IMR-90 (cell line): ENCODE measurements at regions of chr10 and their contacts with region 1.

Region 1: DNA sequence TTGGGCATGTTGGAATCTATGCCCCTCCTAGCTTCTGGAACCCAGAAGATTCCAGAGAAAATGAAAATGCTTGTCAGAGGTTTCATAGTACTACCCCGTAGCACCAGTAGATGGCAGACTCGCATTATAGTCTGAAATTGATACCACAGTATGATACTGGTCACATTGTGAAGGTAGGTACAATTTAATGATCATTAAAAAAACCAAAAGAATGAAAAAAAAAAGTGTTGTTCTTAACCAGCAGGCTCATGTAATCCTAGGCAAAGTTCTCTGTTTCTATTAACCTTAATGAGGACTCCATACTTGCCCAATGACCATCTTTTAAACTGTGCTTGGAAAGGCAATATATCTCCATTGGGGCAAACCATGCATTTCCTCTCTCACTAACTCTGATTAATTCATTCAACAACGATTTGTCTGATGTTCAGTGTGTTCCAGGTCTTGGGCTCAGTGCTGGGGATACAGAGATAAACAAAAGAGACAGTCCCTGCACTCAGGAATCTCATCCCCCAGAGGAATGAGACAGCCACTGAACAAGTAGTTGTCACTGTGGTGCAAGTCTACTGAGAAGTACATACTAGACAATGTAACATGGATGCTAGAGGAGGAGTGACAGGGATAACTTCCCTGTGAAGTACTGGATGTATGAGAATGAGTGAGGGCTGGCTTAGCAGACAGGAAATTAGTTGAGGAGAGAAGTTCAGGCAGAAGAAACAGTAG is 223.5 kb upstream of the PHYHIPL start:
- DNase-seq: peak; percentile 42
- ATAC-seq: peak; percentile 84
- H3K4me3 ChIP-seq: no peak overlapping the region
- H3K27ac ChIP-seq: no peak overlapping the region
- H3K4me1 ChIP-seq: no peaks in the 10 kb centered on the region
- H3K27me3 ChIP-seq: peaks cover 12% of the 10 kb centered on the region
- CTCF ChIP-seq: peak; percentile 77
- POLR2A ChIP-seq: no peak
- RAD21 ChIP-seq: peak; percentile 72

Region 2: DNA sequence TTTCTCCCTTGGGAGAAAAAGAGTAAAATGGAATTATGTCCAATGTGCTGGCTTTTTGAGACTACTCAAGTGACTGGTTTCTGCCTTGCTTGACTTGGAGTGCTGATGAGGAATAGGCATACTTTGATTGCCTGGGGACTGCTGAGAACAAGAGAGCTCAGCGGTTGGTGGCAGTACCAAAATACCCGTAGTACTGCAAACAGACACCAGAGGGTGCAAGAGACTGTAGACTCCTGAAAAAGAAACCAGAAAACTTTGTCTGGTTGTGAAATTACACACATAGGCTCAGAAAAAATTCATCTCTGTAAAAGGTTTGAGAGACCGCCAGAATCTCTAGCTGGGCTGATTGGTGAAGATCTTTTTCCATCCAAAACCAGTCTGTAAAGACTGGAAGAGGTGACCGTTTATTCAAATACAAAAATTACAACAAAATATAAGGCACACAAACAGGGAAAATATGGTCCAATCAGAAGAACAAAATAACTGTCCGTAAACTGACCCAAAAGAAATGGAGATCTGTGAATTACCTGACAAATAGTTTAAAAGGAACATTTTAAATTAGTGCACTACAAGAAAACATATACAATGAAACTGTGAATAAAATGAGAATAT is 421.7 kb before region 1 on chr10:
- CTCF ChIA-PET with region 1: interaction called, 4 read pairs
- POLR2A ChIA-PET with region 1: no interaction called
- dilution Hi-C with region 1: no loop called
- in situ Hi-C with region 1: no loop called
- intact Hi-C with region 1: loop called (anchors 1 kb)
- DNase-seq: peak; percentile 76
- ATAC-seq: peak; percentile 87
- H3K4me3 ChIP-seq: no peak overlapping the region
- H3K27ac ChIP-seq: no peak overlapping the region
- H3K4me1 ChIP-seq: 0 out of 2 replicates have a peak, but pooled peaks cover 2% of the 10 kb centered on the region
- H3K27me3 ChIP-seq: no peaks in the 10 kb centered on the region
- CTCF ChIP-seq: peak; percentile 82
- POLR2A ChIP-seq: no peak
- RAD21 ChIP-seq: peak; percentile 91

Region 3: GRCh38 chr10:59098387-59098786 is 145.5 kb after region 1 on chr10:
- CTCF ChIA-PET with region 1: no interaction called
- POLR2A ChIA-PET with region 1: no interaction called
- dilution Hi-C with region 1: no loop called
- in situ Hi-C with region 1: no loop called
- intact Hi-C with region 1: loop called (anchors 1 kb)
- DNase-seq: peak; percentile 65
- ATAC-seq: peak; percentile 83
- H3K4me3 ChIP-seq: no peak overlapping the region
- H3K27ac ChIP-seq: no peak overlapping the region
- H3K4me1 ChIP-seq: no peaks in the 10 kb centered on the region; the same call in 1 of the 2 replicates
- H3K27me3 ChIP-seq: no peaks in the 10 kb centered on the region
- CTCF ChIP-seq: no peak
- POLR2A ChIP-seq: no peak
- RAD21 ChIP-seq: no peak

Region 4: DNA sequence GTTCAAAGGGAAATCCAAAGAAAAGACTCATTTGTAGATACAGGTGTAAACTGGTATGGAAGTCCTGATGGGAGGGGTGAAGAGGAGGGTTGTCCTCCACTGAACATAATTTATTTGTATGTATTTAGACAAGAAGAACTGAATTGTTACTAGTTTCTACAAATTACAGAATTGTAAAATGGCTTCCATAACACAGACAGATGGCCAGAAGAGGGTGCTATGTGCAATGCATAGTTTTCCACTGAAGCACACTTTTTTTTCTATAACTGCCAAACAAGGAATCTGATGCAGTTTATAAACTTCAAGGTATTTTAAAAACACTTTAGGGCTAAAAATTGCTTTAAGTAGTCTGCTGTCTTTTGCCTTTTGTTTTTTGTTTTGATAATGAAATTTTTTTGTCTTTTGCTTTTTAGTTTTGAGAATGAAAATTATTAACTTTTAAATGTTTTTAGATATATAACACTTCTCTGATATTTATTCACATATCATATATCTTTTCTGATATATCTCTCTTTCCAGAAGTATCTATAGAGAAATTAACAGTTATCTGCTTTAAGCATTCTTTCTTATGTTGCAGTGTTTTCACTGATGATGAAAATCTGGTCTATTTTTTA is 282.0 kb after region 1 on chr10:
- CTCF ChIA-PET with region 1: no interaction called
- POLR2A ChIA-PET with region 1: no interaction called
- dilution Hi-C with region 1: no loop called
- in situ Hi-C with region 1: no loop called
- intact Hi-C with region 1: loop called (anchors 2 kb)
- DNase-seq: peak; percentile 58
- ATAC-seq: peak; percentile 61; the same call in 1 of the 2 replicates
- H3K4me3 ChIP-seq: no peak overlapping the region
- H3K27ac ChIP-seq: no peak overlapping the region
- H3K4me1 ChIP-seq: no peaks in the 10 kb centered on the region
- H3K27me3 ChIP-seq: no peaks in the 10 kb centered on the region
- CTCF ChIP-seq: peak; percentile 62
- POLR2A ChIP-seq: no peak
- RAD21 ChIP-seq: peak; percentile 47

Region 5: GRCh38 chr10:59606551-59606961 is 653.6 kb after region 1 on chr10:
- CTCF ChIA-PET with region 1: no interaction called
- POLR2A ChIA-PET with region 1: no interaction called
- dilution Hi-C with region 1: no loop called
- in situ Hi-C with region 1: loop called (anchors 25 kb)
- intact Hi-C with region 1: no loop called
- DNase-seq: peak; percentile 3
- ATAC-seq: no peak
- H3K4me3 ChIP-seq: no peak overlapping the region
- H3K27ac ChIP-seq: no peak overlapping the region
- H3K4me1 ChIP-seq: no peaks in the 10 kb centered on the region
- H3K27me3 ChIP-seq: no peaks in the 10 kb centered on the region
- CTCF ChIP-seq: no peak
- POLR2A ChIP-seq: no peak
- RAD21 ChIP-seq: no peak